ENCODE measurements at regions of chr7 and their contacts with region 1.

Region 1: GRCh38 chr7:12389089-12389700 is 14.5 kb downstream of the VWDE start:
- DNase-seq: peak; percentile 22
- H3K4me3 Mint-ChIP-seq: no peak overlapping the region
- H3K27ac Mint-ChIP-seq: no peak overlapping the region
- H3K4me1 Mint-ChIP-seq: no peaks in the 10 kb centered on the region
- H3K27me3 Mint-ChIP-seq: no peaks in the 10 kb centered on the region

Region 2: DNA sequence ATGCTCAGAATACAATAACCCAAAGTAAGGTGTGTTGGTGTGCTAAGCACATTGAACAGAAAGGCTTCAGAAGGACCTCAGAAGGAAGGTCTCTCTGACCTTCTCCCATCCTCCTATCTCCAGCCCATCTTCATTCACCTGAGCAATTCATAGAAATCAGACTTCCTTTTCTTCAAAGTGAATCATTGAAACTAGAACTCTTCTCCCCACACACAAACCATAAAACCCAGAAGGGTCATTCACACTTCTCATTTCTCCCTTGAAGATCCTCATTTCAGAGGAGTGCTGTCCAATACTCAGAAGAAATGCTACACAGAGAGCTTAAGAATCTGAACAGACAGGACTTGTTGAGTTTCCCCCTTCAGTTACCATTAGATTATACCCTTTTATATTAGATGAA is 75.0 kb before region 1 on chr7:
- intact Hi-C with region 1: no loop called
- DNase-seq: no peak
- H3K4me3 Mint-ChIP-seq: no peak overlapping the region
- H3K27ac Mint-ChIP-seq: no peak overlapping the region
- H3K4me1 Mint-ChIP-seq: peaks cover 9% of the 10 kb centered on the region
- H3K27me3 Mint-ChIP-seq: peaks cover 5% of the 10 kb centered on the region

Region 3: DNA sequence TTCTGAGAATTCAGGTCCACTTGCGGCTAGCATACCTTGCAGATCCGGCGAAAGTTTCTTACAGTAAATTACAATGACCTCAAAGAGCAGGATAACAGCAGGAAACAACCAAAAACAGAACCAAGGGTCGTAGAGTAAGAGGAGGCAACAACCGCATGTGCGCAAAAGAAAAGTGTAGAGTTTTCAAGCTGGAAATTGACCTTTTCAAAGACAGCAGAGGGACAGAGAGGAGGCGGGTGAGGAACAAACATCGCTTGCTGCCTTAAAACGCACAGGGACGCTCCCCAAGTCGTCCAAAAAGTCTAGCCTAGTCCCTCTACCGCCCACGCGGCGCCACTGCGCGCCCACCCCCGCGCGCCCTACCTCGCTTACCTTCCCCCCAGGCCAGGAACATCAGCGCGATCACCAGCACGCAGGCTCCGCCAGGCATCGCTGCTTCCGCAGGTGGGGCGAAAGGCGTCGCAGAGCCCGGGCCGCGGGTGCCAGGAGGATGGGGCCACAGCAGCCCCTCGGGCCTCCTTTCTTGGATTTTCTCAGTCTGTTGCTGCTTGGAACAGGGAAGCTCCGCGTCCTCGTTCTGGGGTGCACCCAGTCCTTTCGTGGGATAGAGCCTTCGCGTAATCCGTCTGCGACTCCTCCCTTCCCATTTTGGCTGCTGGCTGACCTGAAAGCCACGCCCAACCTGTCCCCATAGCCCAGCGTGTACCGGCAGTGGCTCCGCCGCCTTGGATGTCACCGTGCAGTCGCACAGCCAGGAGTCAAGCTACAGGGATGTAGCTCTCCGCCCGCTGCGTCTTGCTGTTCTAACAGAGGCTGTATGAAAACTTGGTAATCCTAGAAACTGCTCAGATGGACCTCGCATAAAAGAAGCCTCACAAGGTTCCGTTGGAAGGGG is 14.3 kb after region 1 on chr7 and contains the start of gene VWDE:
- intact Hi-C with region 1: loop called (anchors 2 kb)
- DNase-seq: peak; percentile 55
- H3K4me3 Mint-ChIP-seq: peak within 1 kb of the TSS; percentile 88
- H3K27ac Mint-ChIP-seq: peak within 1 kb of the TSS; percentile 69
- H3K4me1 Mint-ChIP-seq: peaks cover 27% of the 10 kb centered on the region
- H3K27me3 Mint-ChIP-seq: peaks cover 25% of the 10 kb centered on the region
- total RNA-seq, gene VWDE: 1.6 and 1.7 TPM in 2 replicates

Measured in activated T-helper 1 cell treated with anti-CD3 and anti-CD28 coated beads, Interleukin-12 subunit alpha, Interleukin-12 subunit beta, Interleukin-2, Interleukin-4 antibody, amounts not matched to agents 30 ng/mL and 10 ng/mL and 1 ng/mL, durations not matched to agents 14 hours and 24 hours and 36 hours (primary cell).